ENCODE measurements at regions of chr11 and their contacts with region 1.

Region 1: GRCh38 chr11:44727373-44728287 is 868 bp downstream of the TSPAN18 start:
- DNase-seq: peak; percentile 77 to 87 (median 85)
- ATAC-seq: peak; percentile 94
- H3K4me3 ChIP-seq: peak overlapping the region; percentile 25
- H3K27ac ChIP-seq: no peak overlapping the region
- H3K4me1 ChIP-seq: peaks cover 7 to 21% of the 10 kb centered on the region in 2 experiments; a peak in 4 of 5 replicates
- H3K27me3 ChIP-seq: peaks cover 8 to 66% of the 10 kb centered on the region in 2 experiments; a peak in 4 of 5 replicates
- CTCF ChIP-seq: peak; percentile 75 to 92 (median 83)
- EP300 ChIP-seq: no peak
- POLR2A ChIP-seq: no peak
- RAD21 ChIP-seq: peak; percentile 77 to 78

Region 2: DNA sequence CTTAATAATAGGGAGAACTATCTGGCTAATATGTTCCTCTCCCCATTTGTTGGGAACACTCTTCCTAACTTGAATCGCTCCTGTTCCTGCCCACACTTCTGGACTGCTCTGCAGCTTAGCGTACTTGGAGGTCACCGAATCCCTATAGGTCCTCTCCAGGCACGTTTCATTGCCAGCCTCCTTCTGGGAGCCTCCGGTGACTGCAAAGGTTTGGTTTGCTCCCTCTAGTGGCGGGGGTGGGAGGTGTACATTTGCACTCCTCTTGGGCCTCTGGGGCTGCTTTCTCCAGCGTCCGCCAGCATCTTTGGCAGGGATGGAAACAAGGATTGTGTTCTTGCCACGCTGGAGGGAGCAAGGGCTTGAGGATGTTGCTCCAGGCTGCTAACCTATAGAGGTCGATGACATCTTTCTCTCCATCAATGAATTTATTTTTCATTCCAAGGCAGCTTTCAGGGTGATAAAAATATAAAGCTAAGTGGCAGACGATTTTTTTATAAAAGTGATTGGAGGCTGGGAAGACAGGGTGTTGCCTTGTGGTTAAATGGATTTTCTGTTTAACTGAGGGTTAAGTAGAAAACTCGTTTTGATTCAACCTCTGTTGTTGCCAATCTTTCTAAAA is 47.8 kb after region 1 on chr11:
- CTCF ChIA-PET with region 1: no interaction called
- POLR2A ChIA-PET with region 1: no interaction called
- in situ Hi-C with region 1: no loop called
- intact Hi-C with region 1: loop called (anchors 5 kb)
- DNase-seq: peak; percentile 83 to 89 (median 86)
- ATAC-seq: peak; percentile 93
- H3K4me3 ChIP-seq: no peak overlapping the region
- H3K27ac ChIP-seq: no peak overlapping the region
- H3K4me1 ChIP-seq: peaks cover 3 to 23% of the 10 kb centered on the region in 2 experiments; a peak in 4 of 5 replicates
- H3K27me3 ChIP-seq: peaks cover 4 to 14% of the 10 kb centered on the region in 2 experiments; a peak in 3 of 5 replicates
- CTCF ChIP-seq: peak; percentile 87 to 92 (median 89)
- EP300 ChIP-seq: no peak
- POLR2A ChIP-seq: no peak
- RAD21 ChIP-seq: peak; percentile 52 to 70; a peak in 3 of 4 replicates

Region 3: DNA sequence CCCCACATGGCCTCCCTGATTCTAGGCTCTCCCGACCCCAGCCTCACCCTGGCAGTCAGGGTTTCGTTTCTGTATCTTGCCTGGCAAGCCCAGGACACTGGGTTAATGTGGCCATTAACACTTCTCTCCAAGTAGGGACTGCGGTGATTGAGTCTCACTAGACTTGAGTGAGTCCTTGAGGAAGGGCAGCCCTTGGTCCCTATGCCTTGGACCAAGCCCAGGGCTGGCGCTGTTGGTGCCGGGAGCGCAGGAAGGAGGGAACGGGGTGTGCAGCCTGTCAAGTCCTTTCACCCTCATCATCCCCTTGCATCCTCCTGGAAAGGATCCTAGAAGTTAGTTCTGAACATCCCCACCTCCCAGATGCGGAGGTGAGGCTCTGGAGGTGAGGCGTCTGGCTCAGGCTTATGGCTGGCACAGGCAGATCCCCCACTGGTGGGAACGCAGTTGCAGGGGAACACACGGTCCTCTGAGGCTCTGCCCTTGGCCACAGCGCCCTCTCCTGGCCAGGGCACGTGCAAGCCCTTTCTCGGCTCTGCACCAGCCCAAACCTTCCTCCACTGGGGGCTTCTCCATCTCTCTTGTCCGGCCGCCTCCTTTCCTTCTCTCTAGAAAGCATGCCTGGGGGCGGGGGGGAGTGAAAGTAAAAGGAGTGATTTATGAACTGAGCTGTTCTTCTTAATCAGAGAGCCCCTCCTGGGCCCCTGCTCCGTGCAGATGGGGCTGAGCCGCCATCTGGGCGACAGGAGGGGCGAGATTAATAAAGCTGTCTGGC is 166.4 kb after region 1 on chr11:
- CTCF ChIA-PET with region 1: interaction called, 13 read pairs
- POLR2A ChIA-PET with region 1: no interaction called
- in situ Hi-C with region 1: no loop called
- intact Hi-C with region 1: loop called (anchors 2 kb)
- DNase-seq: peak; percentile 68 to 85 (median 78)
- ATAC-seq: peak; percentile 99
- H3K4me3 ChIP-seq: no peak overlapping the region
- H3K27ac ChIP-seq: no peak overlapping the region
- H3K4me1 ChIP-seq: peaks cover 0 to 4% of the 10 kb centered on the region in 2 experiments; a peak in 1 of 5 replicates
- H3K27me3 ChIP-seq: peaks cover 0 to 37% of the 10 kb centered on the region in 2 experiments; a peak in 4 of 5 replicates
- CTCF ChIP-seq: peak; percentile 90 to 92 (median 91)
- EP300 ChIP-seq: no peak
- POLR2A ChIP-seq: no peak
- RAD21 ChIP-seq: peak; percentile 84 to 92

Measured in K562 (cell line).